A549 (cell line): ENCODE measurements at regions of chr20 and their contacts with region 1.

Region 1: DNA sequence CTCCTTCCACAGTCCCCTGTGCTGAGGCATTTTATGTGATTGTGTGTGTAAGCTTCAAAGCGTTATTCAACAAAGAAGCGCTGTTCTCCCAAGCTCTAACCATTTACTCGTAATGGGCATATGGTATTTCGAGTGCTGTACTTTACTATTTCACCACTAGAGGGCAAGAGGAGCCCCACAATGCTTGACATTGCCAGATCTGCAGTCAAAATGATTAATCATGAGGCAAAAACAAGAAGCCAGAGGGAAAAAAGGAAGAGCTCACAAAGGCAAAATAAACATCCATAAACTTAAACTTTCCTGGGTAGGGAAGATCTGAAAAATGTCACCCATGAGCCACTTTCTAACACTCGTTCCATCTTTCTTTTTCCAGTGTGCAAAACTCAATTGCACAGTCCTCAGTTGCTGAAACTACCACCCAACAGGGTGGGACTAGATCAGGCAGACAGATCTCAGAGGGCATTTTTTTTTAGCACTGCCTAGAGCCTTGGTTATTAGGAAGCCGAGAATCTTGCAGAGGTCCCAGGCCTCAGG is 215.0 kb upstream of the PLCB4 start:
- DNase-seq: peak; percentile 70 to 80
- ATAC-seq: peak; percentile 88 to 97
- H3K4me3 ChIP-seq: no peak overlapping the region
- H3K27ac ChIP-seq: peak overlapping the region; percentile 45 to 63; a peak in 4 of 6 replicates
- H3K4me1 ChIP-seq: peaks cover 16% of the 10 kb centered on the region
- CTCF ChIP-seq: peak; percentile 95
- EP300 ChIP-seq: no peak
- POLR2A ChIP-seq: no peak
- RAD21 ChIP-seq: peak; percentile 94 to 97

Region 2: DNA sequence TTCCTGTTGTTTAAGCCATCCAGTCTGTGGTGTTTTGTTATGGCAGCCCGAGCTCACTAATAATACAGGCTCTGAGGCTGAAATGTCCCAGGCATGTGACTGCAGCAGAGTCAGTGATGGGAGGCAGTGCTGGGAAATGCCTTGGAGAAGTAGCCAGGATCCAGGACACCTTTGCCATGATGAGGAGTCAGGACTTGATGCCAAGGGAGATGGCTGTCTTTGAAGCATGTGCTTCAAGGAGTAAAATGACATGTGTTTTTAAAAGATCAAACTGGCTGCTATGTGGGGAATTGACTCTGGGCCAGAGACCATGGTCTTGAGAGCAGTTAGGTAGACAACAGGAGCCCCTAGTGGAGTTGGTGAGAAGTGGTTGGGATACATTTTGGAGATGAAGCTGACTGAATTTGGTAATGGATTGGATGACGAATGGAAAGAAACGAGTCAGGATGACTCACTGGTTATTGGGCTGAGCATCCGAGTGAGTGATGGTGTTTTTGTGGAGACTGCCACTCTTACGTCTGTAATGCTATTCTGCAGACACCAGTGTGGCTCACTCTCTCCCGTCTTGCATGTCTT is 399.6 kb before region 1 on chr20:
- CTCF ChIA-PET with region 1: no interaction called
- POLR2A ChIA-PET with region 1: no interaction called
- DNase-seq: peak; percentile 10 to 60
- ATAC-seq: peak; percentile 59 to 67
- H3K4me3 ChIP-seq: no peak overlapping the region
- H3K27ac ChIP-seq: no peak overlapping the region
- H3K4me1 ChIP-seq: no peaks in the 10 kb centered on the region
- CTCF ChIP-seq: no peak
- EP300 ChIP-seq: no peak
- POLR2A ChIP-seq: no peak
- RAD21 ChIP-seq: peak in 1 of 2 experiments; percentile 38; a peak in 2 of 5 replicates

Region 3: GRCh38 chr20:8535403-8536261 is 318.2 kb before region 1 on chr20:
- CTCF ChIA-PET with region 1: no interaction called
- POLR2A ChIA-PET with region 1: no interaction called
- DNase-seq: peak in 1 of 2 experiments; percentile 33
- ATAC-seq: peak in 1 of 2 experiments; percentile 64; a peak in 2 of 6 replicates
- H3K4me3 ChIP-seq: no peak overlapping the region
- H3K27ac ChIP-seq: no peak overlapping the region
- H3K4me1 ChIP-seq: no peaks in the 10 kb centered on the region
- CTCF ChIP-seq: peak; percentile 45
- EP300 ChIP-seq: no peak
- POLR2A ChIP-seq: no peak
- RAD21 ChIP-seq: 0 out of 5 replicates have a peak, but pooled peaks of 1 of the 2 experiments have one; percentile 37

Region 4: DNA sequence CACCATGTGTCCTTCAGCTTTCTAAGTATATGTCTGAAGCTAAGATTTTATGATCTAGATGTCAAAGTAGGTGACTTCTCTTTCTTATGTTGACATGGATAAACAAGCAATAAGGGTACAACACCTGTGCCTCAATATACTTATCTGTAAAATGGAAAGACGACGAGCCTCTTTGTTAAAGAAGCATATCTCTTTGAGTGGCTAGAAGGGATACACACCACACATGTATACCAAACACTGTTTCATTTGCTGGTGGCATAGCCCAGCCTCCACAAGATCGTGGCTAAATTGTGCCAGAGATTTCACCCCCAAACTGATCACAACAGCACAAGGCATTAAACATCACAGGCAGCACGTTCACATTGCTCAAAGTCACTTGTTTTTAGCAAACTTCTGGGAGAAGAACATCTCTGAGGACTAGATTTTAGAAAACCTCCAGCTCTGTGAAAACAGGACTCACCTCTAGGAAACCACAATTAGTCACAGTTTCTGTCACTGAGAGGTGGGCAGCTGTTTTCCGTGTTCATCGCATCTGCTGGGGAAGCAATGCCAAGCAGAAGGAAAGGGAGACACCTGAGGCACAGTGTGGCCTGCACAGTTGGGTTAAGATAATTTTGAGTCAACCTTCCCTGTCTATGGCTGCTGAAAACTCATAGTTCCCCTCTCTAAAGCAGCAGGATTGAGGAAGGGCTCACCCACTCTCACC is 48.0 kb before region 1 on chr20:
- CTCF ChIA-PET with region 1: interaction called, 13 read pairs
- POLR2A ChIA-PET with region 1: no interaction called
- DNase-seq: no peak
- ATAC-seq: no peak
- H3K4me3 ChIP-seq: no peak overlapping the region
- H3K27ac ChIP-seq: no peak overlapping the region
- H3K4me1 ChIP-seq: no peaks in the 10 kb centered on the region
- CTCF ChIP-seq: no peak
- EP300 ChIP-seq: no peak
- POLR2A ChIP-seq: no peak
- RAD21 ChIP-seq: no peak

Region 5: GRCh38 chr20:8842525-8842924 is 11.3 kb before region 1 on chr20:
- CTCF ChIA-PET with region 1: interaction called, 33 read pairs
- POLR2A ChIA-PET with region 1: no interaction called
- DNase-seq: no peak
- ATAC-seq: no peak
- H3K4me3 ChIP-seq: no peak overlapping the region
- H3K27ac ChIP-seq: no peak overlapping the region
- H3K4me1 ChIP-seq: no peaks in the 10 kb centered on the region
- CTCF ChIP-seq: no peak
- EP300 ChIP-seq: no peak
- POLR2A ChIP-seq: no peak
- RAD21 ChIP-seq: no peak

Region 6: DNA sequence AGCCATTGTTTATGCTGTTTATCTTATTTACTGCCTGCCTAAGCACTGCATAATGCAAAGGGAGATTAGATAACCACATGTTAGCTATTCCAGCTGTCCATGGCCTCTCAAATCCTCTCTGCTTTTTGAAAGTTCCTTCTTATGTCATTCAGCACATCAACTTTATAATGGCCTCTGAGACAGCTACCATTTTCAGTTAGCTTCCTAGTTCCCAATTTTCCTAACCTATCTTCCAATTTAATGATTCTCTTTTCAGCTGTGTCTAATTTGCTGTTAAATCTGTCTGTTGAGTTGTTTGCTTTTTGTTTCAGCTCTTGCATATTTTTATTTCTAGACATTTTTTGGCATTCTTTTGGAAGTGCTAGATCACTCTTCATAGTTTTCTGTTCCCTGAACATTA is 41.6 kb after region 1 on chr20:
- CTCF ChIA-PET with region 1: interaction called, 11 read pairs
- POLR2A ChIA-PET with region 1: no interaction called
- DNase-seq: peak in 1 of 2 experiments; percentile 10
- ATAC-seq: no peak
- H3K4me3 ChIP-seq: no peak overlapping the region
- H3K27ac ChIP-seq: no peak overlapping the region
- H3K4me1 ChIP-seq: no peaks in the 10 kb centered on the region
- CTCF ChIP-seq: no peak
- EP300 ChIP-seq: no peak
- POLR2A ChIP-seq: no peak
- RAD21 ChIP-seq: no peak

Region 7: GRCh38 chr20:9344083-9344920 is 490.4 kb after region 1 on chr20:
- CTCF ChIA-PET with region 1: interaction called, 16 read pairs
- POLR2A ChIA-PET with region 1: no interaction called
- DNase-seq: no peak
- ATAC-seq: 0 out of 6 replicates have a peak, but pooled peaks of 1 of the 2 experiments have one; percentile 30
- H3K4me3 ChIP-seq: no peak overlapping the region
- H3K27ac ChIP-seq: peak overlapping the region; percentile 9 to 45; a peak in 1 of 6 replicates
- H3K4me1 ChIP-seq: peaks cover 37% of the 10 kb centered on the region
- CTCF ChIP-seq: no peak
- EP300 ChIP-seq: no peak
- POLR2A ChIP-seq: no peak
- RAD21 ChIP-seq: no peak

Region 8: DNA sequence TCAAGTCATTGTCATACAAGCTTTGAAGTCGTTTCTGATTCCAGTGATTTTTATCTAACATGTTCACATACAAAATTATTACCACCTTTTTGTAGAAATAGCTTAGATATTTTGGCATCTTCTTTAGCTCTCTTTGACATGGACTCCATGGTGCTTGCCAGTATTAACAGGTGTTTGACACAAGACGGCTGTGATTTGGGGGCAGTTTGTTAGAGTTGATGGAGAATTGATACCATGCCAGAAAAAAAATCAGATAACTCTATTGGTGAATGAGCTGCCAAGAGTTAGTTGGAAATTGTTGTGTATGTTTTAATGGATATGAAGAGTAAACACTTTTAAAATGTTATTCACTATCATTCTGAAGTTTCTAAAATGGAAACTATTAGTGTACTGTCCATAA is 513.9 kb after region 1 on chr20:
- CTCF ChIA-PET with region 1: interaction called, 24 read pairs
- POLR2A ChIA-PET with region 1: no interaction called
- DNase-seq: no peak
- ATAC-seq: no peak
- H3K4me3 ChIP-seq: no peak overlapping the region
- H3K27ac ChIP-seq: no peak overlapping the region
- H3K4me1 ChIP-seq: no peaks in the 10 kb centered on the region
- CTCF ChIP-seq: no peak
- EP300 ChIP-seq: no peak
- POLR2A ChIP-seq: no peak
- RAD21 ChIP-seq: no peak